Keratinocyte (primary cell): ENCODE measurements at regions of chr2 and their contacts with region 1.

Region 1: GRCh38 chr2:231877533-231878456 is 48.4 kb downstream of the NPPC start:
- DNase-seq: peak; percentile 32
- H3K4me3 ChIP-seq: no peak overlapping the region
- H3K27ac ChIP-seq: peak overlapping the region; percentile 36
- H3K4me1 ChIP-seq: peaks cover 12% of the 10 kb centered on the region
- H3K27me3 ChIP-seq: no peaks in the 10 kb centered on the region
- CTCF ChIP-seq: no peak

Region 2: GRCh38 chr2:232170396-232170795 is 292.6 kb after region 1 on chr2:
- dilution Hi-C with region 1: no loop called
- DNase-seq: no peak
- H3K4me3 ChIP-seq: no peak overlapping the region
- H3K27ac ChIP-seq: no peak overlapping the region
- H3K4me1 ChIP-seq: no peaks in the 10 kb centered on the region
- H3K27me3 ChIP-seq: no peaks in the 10 kb centered on the region
- CTCF ChIP-seq: no peak

Region 3: GRCh38 chr2:232444409-232445148 is 566.8 kb after region 1 on chr2:
- dilution Hi-C with region 1: loop called (anchors 25 kb)
- DNase-seq: peak; percentile 26
- H3K4me3 ChIP-seq: no peak overlapping the region
- H3K27ac ChIP-seq: no peak overlapping the region
- H3K4me1 ChIP-seq: no peaks in the 10 kb centered on the region
- H3K27me3 ChIP-seq: no peaks in the 10 kb centered on the region
- CTCF ChIP-seq: peak; percentile 79 to 97 (median 85)